ENCODE measurements at regions of chr6 and their contacts with region 1.

Region 1: DNA sequence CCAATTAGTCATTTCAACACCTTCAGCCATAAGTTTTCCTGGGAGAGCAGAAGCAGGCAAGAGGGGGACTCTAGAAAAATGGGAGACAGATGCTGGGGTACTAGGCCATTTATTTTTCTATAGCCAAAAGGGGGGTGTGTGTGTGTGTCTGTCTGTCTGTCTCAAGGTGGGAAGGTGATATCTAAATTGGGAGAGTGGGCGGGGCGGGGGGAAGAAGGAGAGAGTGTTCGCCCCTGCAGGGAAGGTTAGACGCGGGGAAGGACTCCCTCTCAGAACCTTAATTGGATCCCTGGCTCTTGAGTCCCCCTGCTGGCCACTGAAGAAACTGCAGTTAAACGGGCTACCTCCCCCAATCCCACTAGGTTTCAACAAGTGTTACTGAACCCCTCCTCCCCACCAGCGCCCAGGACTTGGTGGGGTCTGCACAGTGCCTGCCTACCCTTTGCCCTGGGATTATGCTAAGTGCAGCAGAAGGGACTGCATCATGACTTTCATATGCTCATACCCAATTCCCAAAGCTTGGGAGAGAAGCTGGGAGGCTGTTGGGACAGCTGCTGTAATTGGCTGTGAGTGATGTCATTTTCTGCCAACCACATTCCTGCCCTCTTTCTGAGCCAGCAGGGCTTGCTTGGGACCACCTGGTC is 45.8 kb downstream of the FOXP4 start:
- DNase-seq: peak; percentile 71 to 85
- ATAC-seq: peak; percentile 75 to 95 (median 85)
- H3K4me3 ChIP-seq: no peak overlapping the region
- H3K4me3 Mint-ChIP-seq: no peak overlapping the region
- H3K27ac ChIP-seq: no peak overlapping the region
- H3K27ac Mint-ChIP-seq: no peak overlapping the region
- H3K4me1 ChIP-seq: no peaks in the 10 kb centered on the region
- H3K4me1 Mint-ChIP-seq: peaks cover 5 to 7% of the 10 kb centered on the region in 2 donors
- H3K27me3 ChIP-seq: no peaks in the 10 kb centered on the region
- H3K27me3 Mint-ChIP-seq: no peaks in the 10 kb centered on the region
- CTCF ChIP-seq: peak; percentile 89

Region 2: DNA sequence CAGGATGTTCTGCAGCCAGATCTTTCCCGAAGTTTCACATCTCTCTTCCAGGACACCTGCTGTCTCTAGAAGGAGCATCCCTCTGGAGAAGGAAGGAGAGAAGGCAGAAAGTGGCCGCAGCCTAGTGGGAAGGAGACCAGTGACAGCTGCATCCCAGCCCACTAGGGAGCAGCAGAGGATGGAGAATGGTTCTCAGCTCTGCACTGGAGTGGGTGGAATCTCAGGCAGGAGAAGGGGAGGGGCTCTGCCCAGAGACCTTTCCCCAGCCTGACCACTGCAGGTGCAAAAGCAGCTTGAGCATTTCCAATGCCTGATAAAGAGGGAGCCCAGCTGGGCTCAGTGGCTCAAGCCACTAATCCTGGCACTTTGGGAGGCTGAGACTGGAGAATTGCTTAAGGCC is 224.3 kb before region 1 on chr6:
- intact Hi-C with region 1: loop called (anchors 1 kb)
- DNase-seq: peak in 1 of 2 donors; percentile 20
- ATAC-seq: no peak
- H3K4me3 ChIP-seq: no peak overlapping the region
- H3K4me3 Mint-ChIP-seq: no peak overlapping the region
- H3K27ac ChIP-seq: no peak overlapping the region
- H3K27ac Mint-ChIP-seq: no peak overlapping the region
- H3K4me1 ChIP-seq: peaks cover 24% of the 10 kb centered on the region
- H3K4me1 Mint-ChIP-seq: peaks cover 23% of the 10 kb centered on the region in 2 donors
- H3K27me3 ChIP-seq: peaks cover 28% of the 10 kb centered on the region
- H3K27me3 Mint-ChIP-seq: peaks cover 33 to 56% of the 10 kb centered on the region in 2 donors
- CTCF ChIP-seq: no peak

Region 3: GRCh38 chr6:41424370-41425058 is 167.5 kb before region 1 on chr6:
- intact Hi-C with region 1: loop called (anchors 1 kb)
- DNase-seq: peak; percentile 75 to 87
- ATAC-seq: peak; percentile 72 to 81 (median 79)
- H3K4me3 ChIP-seq: no peak overlapping the region
- H3K4me3 Mint-ChIP-seq: no peak overlapping the region
- H3K27ac ChIP-seq: no peak overlapping the region
- H3K27ac Mint-ChIP-seq: no peak overlapping the region
- H3K4me1 ChIP-seq: peaks cover 31% of the 10 kb centered on the region
- H3K4me1 Mint-ChIP-seq: peaks cover 7 to 9% of the 10 kb centered on the region in 2 donors
- H3K27me3 ChIP-seq: peaks cover 28% of the 10 kb centered on the region
- H3K27me3 Mint-ChIP-seq: peaks cover 19 to 29% of the 10 kb centered on the region in 2 donors
- CTCF ChIP-seq: peak; percentile 80

Region 4: DNA sequence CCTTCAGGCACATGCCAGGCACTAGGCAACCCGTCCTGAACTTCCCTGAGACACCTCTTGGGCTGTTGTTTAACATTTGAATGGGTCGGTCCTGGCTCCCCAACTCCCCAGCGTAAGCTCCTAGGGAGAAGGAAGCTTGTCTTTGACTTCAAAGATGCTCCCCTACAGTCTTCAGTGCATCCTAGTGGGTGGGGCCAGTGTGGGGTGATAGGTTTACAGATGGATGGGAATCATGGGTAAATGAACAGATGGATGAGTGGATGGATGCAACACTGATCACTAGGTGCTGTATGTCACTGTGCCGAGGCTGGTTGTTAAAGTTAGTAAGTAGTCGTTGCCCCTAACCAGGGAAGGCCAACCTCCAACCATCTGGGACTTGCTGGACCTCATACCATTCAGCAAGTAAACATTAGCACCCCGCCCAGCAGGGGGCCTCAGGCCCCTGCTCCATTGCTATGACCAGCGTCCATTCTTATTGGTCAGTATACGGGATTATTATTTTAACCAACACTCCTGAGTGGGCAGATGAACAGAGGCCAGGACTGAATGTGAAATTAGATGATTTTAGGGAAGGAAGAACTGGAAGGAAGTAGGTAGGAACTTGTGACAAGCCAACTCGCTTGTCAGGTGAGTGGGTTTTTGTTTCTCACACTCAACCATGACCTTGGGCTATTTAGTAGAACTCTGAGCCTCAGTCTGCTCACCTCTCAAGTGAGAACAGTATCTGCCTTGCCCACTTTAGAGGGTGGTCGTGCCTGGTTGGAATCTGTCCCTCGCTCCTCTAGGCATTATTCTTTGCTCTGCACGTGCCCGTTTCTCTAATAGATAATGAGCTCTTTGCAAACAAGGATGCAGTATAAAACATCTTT is 128.7 kb before region 1 on chr6:
- intact Hi-C with region 1: loop called (anchors 1 kb)
- DNase-seq: peak in 1 of 2 donors; percentile 28
- ATAC-seq: peak in 2 of 3 donors; percentile 45 to 53
- H3K4me3 ChIP-seq: no peak overlapping the region
- H3K4me3 Mint-ChIP-seq: no peak overlapping the region
- H3K27ac ChIP-seq: no peak overlapping the region
- H3K27ac Mint-ChIP-seq: no peak overlapping the region
- H3K4me1 ChIP-seq: no peaks in the 10 kb centered on the region
- H3K4me1 Mint-ChIP-seq: peaks cover 0 to 8% of the 10 kb centered on the region in 2 donors
- H3K27me3 ChIP-seq: peaks cover 4% of the 10 kb centered on the region
- H3K27me3 Mint-ChIP-seq: peaks cover 54 to 63% of the 10 kb centered on the region in 2 donors
- CTCF ChIP-seq: no peak

Region 5: GRCh38 chr6:41531591-41532582 is 60.1 kb before region 1 on chr6:
- intact Hi-C with region 1: no loop called
- DNase-seq: peak; percentile 51 to 70
- ATAC-seq: peak; percentile 70 to 81 (median 79)
- H3K4me3 ChIP-seq: peak overlapping the region; percentile 12
- H3K4me3 Mint-ChIP-seq: peak overlapping the region; percentile 92
- H3K27ac ChIP-seq: peak overlapping the region; percentile 59
- H3K27ac Mint-ChIP-seq: peak overlapping the region; percentile 92 to 95
- H3K4me1 ChIP-seq: peaks cover 36% of the 10 kb centered on the region
- H3K4me1 Mint-ChIP-seq: peaks cover 32% of the 10 kb centered on the region in 2 donors
- H3K27me3 ChIP-seq: no peaks in the 10 kb centered on the region
- H3K27me3 Mint-ChIP-seq: peaks cover 27 to 34% of the 10 kb centered on the region in 2 donors
- CTCF ChIP-seq: no peak